Activated CD4-positive, alpha-beta memory T cell treated with anti-CD3 and anti-CD28 coated beads for 36 hours (primary cell): ENCODE measurements at regions of chr15 and their contacts with region 1.

Region 1: DNA sequence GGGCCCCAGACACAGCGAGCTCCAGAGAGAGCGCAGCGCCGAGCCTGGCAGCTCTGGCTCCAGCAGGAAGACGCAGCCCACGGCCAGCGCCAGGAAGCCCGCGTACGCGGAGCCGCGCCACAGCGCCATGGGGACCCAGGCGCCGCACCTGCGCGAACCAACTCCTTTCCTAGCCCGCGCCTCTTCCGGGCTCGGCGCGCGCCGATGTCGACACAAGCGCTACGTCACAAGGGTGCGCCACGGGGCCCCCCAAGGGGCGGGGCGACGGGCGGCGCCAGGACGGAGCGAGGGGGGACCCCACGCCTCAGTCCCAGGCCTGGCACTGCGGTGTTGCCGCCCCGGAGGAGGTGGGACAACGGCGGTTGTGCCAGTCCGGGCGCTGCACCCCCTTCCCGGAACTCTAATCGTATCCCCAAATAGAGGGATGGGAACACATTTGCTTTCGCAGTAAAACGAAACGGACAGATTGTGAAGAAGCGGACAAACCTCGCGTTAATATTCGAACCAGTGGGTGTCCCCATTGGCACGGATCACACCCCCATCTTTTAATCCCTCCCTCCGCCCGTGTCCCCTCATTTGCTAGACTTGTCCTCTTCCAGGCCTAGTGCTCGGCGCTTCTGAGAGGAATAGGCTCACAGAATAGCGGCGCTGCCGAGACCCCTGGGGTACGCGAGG is at the start of gene ADPGK:
- DNase-seq: peak; percentile 95
- H3K4me3 Mint-ChIP-seq: peak within 1 kb of the TSS; percentile 85
- H3K27ac Mint-ChIP-seq: peak within 1 kb of the TSS; percentile 93
- H3K4me1 Mint-ChIP-seq: peaks cover 65% of the 10 kb centered on the region
- H3K27me3 Mint-ChIP-seq: no peaks in the 10 kb centered on the region
- total RNA-seq, gene ADPGK: 60.9 to 61.5 TPM

Region 2: GRCh38 chr15:72231066-72231846 is 552.4 kb before region 1 on chr15 and contains the start of gene PKM:
- CTCF ChIA-PET with region 1: no interaction called
- POLR2A ChIA-PET with region 1: interaction called, 4 read pairs
- intact Hi-C with region 1: loop called (anchors 10 kb)
- DNase-seq: peak; percentile 97
- H3K4me3 Mint-ChIP-seq: peak within 1 kb of the TSS; percentile 94
- H3K27ac Mint-ChIP-seq: peak within 1 kb of the TSS; percentile 98
- H3K4me1 Mint-ChIP-seq: peaks cover 27% of the 10 kb centered on the region
- H3K27me3 Mint-ChIP-seq: no peaks in the 10 kb centered on the region
- total RNA-seq, gene PKM: 2,032 to 2,053 TPM

Region 3: GRCh38 chr15:72685925-72686794 is 97.5 kb before region 1 on chr15 and contains the starts of genes BBS4 and HIGD2B:
- CTCF ChIA-PET with region 1: no interaction called
- POLR2A ChIA-PET with region 1: interaction called, 3 read pairs
- intact Hi-C with region 1: loop called (anchors 5 kb)
- DNase-seq: peak; percentile 93
- H3K4me3 Mint-ChIP-seq: peak within 1 kb of the TSS; percentile 85
- H3K27ac Mint-ChIP-seq: peak within 1 kb of the TSS; percentile 89
- H3K4me1 Mint-ChIP-seq: peaks cover 13% of the 10 kb centered on the region
- H3K27me3 Mint-ChIP-seq: no peaks in the 10 kb centered on the region
- total RNA-seq, gene BBS4: 12.6 to 15.5 TPM
- total RNA-seq, gene HIGD2B: 0.27 to 0.31 TPM

Region 4: DNA sequence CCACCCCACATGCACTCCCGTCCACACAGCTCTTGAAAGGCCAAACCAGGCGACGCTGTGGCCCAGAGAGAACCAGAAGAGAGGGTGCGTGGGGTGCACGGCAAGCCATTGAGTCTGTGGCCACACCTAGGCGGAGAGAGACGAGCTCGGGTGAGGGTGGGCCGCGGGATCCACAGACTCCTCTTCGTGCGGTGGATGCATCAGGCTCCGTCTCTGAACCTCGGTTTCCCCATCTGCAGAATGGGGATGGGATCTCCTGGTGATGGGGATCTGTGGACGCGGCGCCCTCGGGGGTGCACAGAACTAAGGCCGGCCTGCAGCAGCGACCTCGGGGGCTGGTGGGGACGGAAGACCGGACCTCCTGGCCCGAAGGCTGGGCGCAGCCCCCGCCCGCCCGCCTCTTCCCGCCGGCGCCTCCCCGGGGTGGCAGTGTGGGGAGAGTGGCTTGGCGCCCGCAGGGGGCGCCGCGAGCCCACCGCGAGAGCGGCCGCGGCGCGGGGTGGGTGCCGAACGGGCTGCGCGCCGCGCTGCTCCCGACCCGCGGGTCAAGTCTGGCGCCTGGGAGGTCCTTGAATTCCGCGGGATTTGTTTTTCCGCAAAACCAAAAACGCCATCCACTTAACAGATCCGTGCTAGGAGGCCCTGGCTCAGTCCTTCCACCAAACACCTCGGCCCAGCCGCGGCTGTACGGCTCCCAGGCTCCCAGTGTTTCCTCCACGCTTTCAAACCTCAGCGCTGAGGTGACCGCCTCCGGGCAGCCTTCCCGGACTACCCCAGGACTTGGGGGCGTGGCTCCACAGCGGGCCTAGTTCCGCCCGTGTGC is 13.0 kb after region 1 on chr15:
- CTCF ChIA-PET with region 1: interaction called, 41 read pairs
- POLR2A ChIA-PET with region 1: interaction called, 11 read pairs
- intact Hi-C with region 1: no loop called
- DNase-seq: peak; percentile 49
- H3K4me3 Mint-ChIP-seq: peak overlapping the region; percentile 71
- H3K27ac Mint-ChIP-seq: no peak overlapping the region
- H3K4me1 Mint-ChIP-seq: peaks cover 11% of the 10 kb centered on the region
- H3K27me3 Mint-ChIP-seq: peaks cover 20% of the 10 kb centered on the region

Region 5: GRCh38 chr15:73081321-73081958 is 297.7 kb after region 1 on chr15:
- CTCF ChIA-PET with region 1: interaction called, 10 read pairs
- POLR2A ChIA-PET with region 1: interaction called, 3 read pairs
- intact Hi-C with region 1: loop called (anchors 1 kb)
- DNase-seq: no peak
- H3K4me3 Mint-ChIP-seq: no peak overlapping the region
- H3K27ac Mint-ChIP-seq: no peak overlapping the region
- H3K4me1 Mint-ChIP-seq: peaks cover 2% of the 10 kb centered on the region
- H3K27me3 Mint-ChIP-seq: no peaks in the 10 kb centered on the region

Region 6: GRCh38 chr15:73240866-73241499 is 457.3 kb after region 1 on chr15:
- CTCF ChIA-PET with region 1: interaction called, 5 read pairs
- POLR2A ChIA-PET with region 1: no interaction called
- intact Hi-C with region 1: loop called (anchors 10 kb)
- DNase-seq: peak; percentile 82
- H3K4me3 Mint-ChIP-seq: no peak overlapping the region
- H3K27ac Mint-ChIP-seq: no peak overlapping the region
- H3K4me1 Mint-ChIP-seq: no peaks in the 10 kb centered on the region
- H3K27me3 Mint-ChIP-seq: no peaks in the 10 kb centered on the region